CD8-positive, alpha-beta T cell (primary cell): ENCODE measurements at regions of chr15 and their contacts with region 1.

Region 1: DNA sequence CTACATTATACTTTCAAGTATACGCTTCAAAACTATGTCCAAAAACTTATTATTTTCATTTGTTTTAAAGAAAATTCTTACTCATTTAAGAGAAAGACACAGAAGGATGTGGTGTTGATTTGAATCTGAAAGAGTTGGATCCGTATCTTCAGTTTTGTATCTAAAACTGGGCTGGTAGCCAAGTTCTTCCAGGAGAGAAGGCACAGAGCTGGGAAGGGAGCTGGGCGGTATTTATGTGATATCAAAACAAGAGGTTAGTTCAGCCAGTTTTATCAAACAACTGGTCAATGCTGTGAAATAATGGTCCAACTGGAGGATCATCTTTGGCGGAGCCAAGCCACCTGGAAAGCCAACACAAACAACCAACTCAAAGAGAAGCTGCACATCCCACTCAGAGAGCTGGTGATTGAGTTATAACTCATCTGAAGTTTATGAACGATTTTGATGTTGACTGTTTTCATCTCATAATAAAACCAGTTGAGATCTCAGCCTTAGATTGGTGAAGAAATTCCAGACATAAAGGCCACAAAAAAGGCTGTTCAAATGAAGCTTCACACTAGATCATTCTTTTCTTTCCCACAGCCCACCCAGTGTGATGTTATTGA is 489.6 kb upstream of the RASGRP1 start:
- DNase-seq: no peak
- ATAC-seq: no peak
- H3K4me3 ChIP-seq: no peak overlapping the region
- H3K4me3 Mint-ChIP-seq: no peak overlapping the region
- H3K27ac ChIP-seq: no peak overlapping the region
- H3K27ac Mint-ChIP-seq: no peak overlapping the region
- H3K4me1 ChIP-seq: no peaks in the 10 kb centered on the region
- H3K4me1 Mint-ChIP-seq: no peaks in the 10 kb centered on the region
- H3K27me3 ChIP-seq: no peaks in the 10 kb centered on the region
- H3K27me3 Mint-ChIP-seq: peaks cover 7% of the 10 kb centered on the region
- CTCF ChIP-seq: no peak

Region 2: GRCh38 chr15:39095218-39095879 is 41.1 kb after region 1 on chr15:
- CTCF ChIA-PET with region 1: no interaction called
- POLR2A ChIA-PET with region 1: no interaction called
- intact Hi-C with region 1: loop called in 1 of 2 experiments (anchors 1 kb)
- DNase-seq: no peak
- ATAC-seq: no peak
- H3K4me3 ChIP-seq: no peak overlapping the region
- H3K4me3 Mint-ChIP-seq: no peak overlapping the region
- H3K27ac ChIP-seq: no peak overlapping the region
- H3K27ac Mint-ChIP-seq: no peak overlapping the region
- H3K4me1 ChIP-seq: no peaks in the 10 kb centered on the region
- H3K4me1 Mint-ChIP-seq: no peaks in the 10 kb centered on the region
- H3K27me3 ChIP-seq: no peaks in the 10 kb centered on the region
- H3K27me3 Mint-ChIP-seq: peaks cover 19% of the 10 kb centered on the region
- CTCF ChIP-seq: no peak